Right ventricle myocardium inferior (tissue), 1 donor: ENCODE measurements at regions of chr10 and their contacts with region 1.

Region 1: GRCh38 chr10:119301397-119301796 is 94.0 kb downstream of the GRK5 start:
- DNase-seq: no peak
- ATAC-seq: no peak

Region 2: GRCh38 chr10:118832241-118832651 is 469.2 kb before region 1 on chr10:
- intact Hi-C with region 1: no loop called
- DNase-seq: peak; percentile 85
- ATAC-seq: peak; percentile 54

Region 3: DNA sequence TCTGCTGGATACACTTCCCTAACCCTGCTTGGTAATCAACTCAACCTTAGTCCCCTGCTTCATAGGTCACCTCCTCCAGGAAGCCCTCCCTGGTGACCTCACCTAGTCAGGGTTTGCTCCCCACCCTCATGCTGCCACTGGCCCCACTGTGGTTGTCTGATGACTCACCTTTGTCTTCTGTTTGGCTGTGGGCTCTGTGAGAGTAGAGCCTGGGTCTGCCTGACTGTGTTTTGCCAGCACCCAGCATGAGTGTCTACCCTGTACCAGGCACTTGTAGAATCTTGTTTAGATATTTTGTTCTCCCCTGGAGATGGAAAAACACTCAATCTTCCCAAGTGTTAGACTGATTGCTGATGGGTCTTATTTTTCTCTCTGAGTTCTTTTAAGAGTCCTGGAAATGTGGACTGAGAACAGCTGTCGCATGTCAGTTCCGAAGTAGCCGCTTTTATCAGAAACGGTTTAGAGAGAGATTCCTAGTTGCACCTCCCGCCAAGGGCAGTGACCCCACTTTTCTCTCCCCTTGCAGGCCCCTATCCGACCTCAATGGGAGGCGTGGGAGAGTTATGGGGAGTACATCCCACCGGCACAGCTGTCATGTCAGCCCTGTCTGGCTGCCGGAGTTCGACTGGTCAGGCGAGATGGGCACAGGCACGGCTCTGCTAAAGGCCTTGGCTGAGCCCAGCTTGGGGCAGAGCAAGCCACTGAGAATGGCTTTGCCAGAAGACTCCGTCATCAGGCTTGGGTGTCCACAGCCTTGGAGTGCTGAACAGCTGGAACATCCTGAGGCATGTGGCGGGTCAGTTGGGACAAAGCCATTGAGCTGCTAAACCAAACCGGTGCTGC is 40.3 kb after region 1 on chr10:
- intact Hi-C with region 1: loop called (anchors 1 kb)
- DNase-seq: peak; percentile 88
- ATAC-seq: peak; percentile 90